ENCODE measurements at regions of chr3 and their contacts with region 1.

Region 1: GRCh38 chr3:33372218-33373081 is 67.8 kb downstream of the UBP1 start:
- DNase-seq: peak; percentile 39 to 57 (median 49)
- H3K4me3 ChIP-seq: no peak overlapping the region
- H3K4me3 Mint-ChIP-seq: peak overlapping the region in 1 of 8 donors; percentile 7
- H3K27ac ChIP-seq: no peak overlapping the region
- H3K27ac Mint-ChIP-seq: peak overlapping the region in 1 of 7 donors; percentile 51
- H3K4me1 ChIP-seq: no peaks in the 10 kb centered on the region
- H3K4me1 Mint-ChIP-seq: peaks cover 2 to 7% (median 5%) of the 10 kb centered on the region in 4 donors
- H3K27me3 ChIP-seq: no peaks in the 10 kb centered on the region
- H3K27me3 Mint-ChIP-seq: peaks cover 11 to 12% of the 10 kb centered on the region in 2 donors

Region 2: DNA sequence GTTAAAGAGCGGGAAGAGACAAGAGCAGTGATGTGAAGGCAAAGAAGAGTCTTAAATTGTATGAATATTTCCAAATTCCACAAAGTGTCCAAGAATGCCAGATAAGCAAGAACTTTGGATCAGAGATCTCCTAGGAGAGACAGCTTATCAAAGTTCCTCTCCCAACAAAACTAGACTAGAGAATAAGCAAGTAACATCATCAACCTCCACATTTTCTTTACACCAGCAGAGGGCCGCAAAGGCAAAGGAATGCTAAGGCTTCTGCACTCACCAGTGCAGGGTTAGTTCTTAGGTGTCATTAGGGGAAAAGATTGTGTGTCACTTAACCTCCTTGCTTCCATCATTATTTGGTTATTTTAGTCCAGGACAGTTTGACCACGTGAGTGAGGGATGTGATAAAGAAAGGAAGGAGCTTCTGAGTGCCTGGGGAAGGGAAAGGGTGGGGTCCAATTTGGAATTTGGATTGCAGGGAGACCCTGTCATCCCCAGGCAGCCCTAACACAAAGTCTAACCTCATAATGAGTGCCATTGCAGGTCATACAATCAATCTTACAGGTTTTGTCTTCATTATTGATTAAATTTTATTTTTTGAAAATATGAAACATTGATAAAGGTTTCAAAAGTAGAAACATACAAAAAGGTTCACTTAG is 862.2 kb before region 1 on chr3:
- CTCF ChIA-PET with region 1: interaction called, 3 read pairs
- POLR2A ChIA-PET with region 1: no interaction called
- intact Hi-C with region 1: loop called (anchors 5 kb)
- DNase-seq: peak; percentile 56 to 68 (median 59)
- H3K4me3 ChIP-seq: no peak overlapping the region
- H3K4me3 Mint-ChIP-seq: no peak overlapping the region
- H3K27ac ChIP-seq: no peak overlapping the region
- H3K27ac Mint-ChIP-seq: peak overlapping the region in 3 of 7 donors; percentile 1 to 57 (median 37)
- H3K4me1 ChIP-seq: no peaks in the 10 kb centered on the region
- H3K4me1 Mint-ChIP-seq: peaks cover 0 to 4% (median 1%) of the 10 kb centered on the region in 4 donors
- H3K27me3 ChIP-seq: no peaks in the 10 kb centered on the region
- H3K27me3 Mint-ChIP-seq: no peaks in the 10 kb centered on the region

Region 3: DNA sequence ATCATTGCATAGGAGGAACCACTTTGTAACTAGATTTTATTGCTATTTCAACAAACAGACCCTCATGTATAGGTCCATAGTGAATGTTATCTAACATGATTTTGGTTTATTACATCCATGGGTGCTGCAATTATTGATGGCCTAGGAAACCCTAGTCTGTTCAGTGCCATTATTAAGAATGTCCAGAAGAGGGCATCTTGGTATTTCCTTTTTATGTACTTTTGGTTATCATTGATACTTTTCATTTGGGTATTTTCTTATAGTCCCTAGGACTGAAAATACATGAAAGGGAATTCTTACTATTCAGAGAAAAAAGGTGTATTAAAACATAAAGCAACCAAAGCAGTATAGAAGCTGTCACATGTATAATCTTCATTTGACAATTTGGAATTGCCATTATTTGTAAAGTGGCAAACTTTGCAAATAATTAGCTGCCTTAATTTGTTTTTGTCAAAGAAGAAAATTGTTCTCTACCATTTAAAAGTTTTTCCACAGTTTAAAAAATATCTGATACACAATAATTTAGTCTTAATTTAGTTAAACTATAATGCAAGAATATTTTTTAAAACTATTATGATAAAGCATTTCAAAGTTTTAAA is 638.7 kb before region 1 on chr3:
- CTCF ChIA-PET with region 1: interaction called, 6 read pairs
- POLR2A ChIA-PET with region 1: no interaction called
- intact Hi-C with region 1: loop called (anchors 2 kb)
- DNase-seq: peak in 3 of 5 donors; percentile 16 to 22 (median 21)
- H3K4me3 ChIP-seq: no peak overlapping the region
- H3K4me3 Mint-ChIP-seq: no peak overlapping the region
- H3K27ac ChIP-seq: no peak overlapping the region
- H3K27ac Mint-ChIP-seq: no peak overlapping the region
- H3K4me1 ChIP-seq: no peaks in the 10 kb centered on the region
- H3K4me1 Mint-ChIP-seq: peaks cover 0 to 1% (median 0%) of the 10 kb centered on the region in 4 donors
- H3K27me3 ChIP-seq: no peaks in the 10 kb centered on the region
- H3K27me3 Mint-ChIP-seq: no peaks in the 10 kb centered on the region

Region 4: GRCh38 chr3:33315826-33316225 is 56.6 kb before region 1 on chr3:
- CTCF ChIA-PET with region 1: no interaction called
- POLR2A ChIA-PET with region 1: no interaction called
- intact Hi-C with region 1: no loop called
- DNase-seq: no peak
- H3K4me3 ChIP-seq: no peak overlapping the region
- H3K4me3 Mint-ChIP-seq: no peak overlapping the region
- H3K27ac ChIP-seq: no peak overlapping the region
- H3K27ac Mint-ChIP-seq: no peak overlapping the region
- H3K4me1 ChIP-seq: no peaks in the 10 kb centered on the region
- H3K4me1 Mint-ChIP-seq: peaks cover 0 to 6% (median 5%) of the 10 kb centered on the region in 4 donors
- H3K27me3 ChIP-seq: no peaks in the 10 kb centered on the region
- H3K27me3 Mint-ChIP-seq: peaks cover 10 to 18% of the 10 kb centered on the region in 2 donors

Region 5: DNA sequence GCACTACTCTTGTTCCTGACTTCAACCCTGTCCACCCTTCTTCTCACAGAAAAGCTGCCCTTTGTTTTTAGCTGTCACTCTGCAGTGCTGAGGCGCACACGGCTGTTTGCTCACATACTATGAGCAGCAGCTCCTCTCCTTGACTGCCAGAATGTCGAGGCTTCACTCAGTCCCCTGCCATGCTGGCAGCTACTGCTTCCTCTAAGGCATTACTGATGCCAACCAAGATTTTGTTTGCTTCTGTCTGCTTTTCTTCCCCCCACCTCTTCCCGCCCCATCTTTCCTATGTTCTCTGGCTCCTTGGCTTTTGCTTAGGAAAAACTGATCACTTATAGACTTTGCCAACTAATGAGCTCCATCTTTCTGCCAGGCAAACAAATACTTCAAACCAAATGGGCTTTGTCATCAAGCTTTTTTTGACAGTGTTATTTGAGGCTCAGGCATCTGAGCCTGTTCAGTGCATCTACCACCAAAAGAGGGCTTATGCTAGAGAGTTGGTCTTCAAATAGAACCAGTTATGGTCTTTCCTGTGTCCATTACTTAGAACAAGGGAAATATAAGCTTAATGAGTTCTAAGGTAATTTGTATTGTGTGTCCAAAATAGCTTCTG is 14.2 kb before region 1 on chr3:
- CTCF ChIA-PET with region 1: interaction called, 16 read pairs
- POLR2A ChIA-PET with region 1: no interaction called
- intact Hi-C with region 1: no loop called
- DNase-seq: no peak
- H3K4me3 ChIP-seq: no peak overlapping the region
- H3K4me3 Mint-ChIP-seq: no peak overlapping the region
- H3K27ac ChIP-seq: no peak overlapping the region
- H3K27ac Mint-ChIP-seq: peak overlapping the region in 1 of 7 donors; percentile 29
- H3K4me1 ChIP-seq: no peaks in the 10 kb centered on the region
- H3K4me1 Mint-ChIP-seq: peaks cover 0 to 1% (median 0%) of the 10 kb centered on the region in 4 donors
- H3K27me3 ChIP-seq: no peaks in the 10 kb centered on the region
- H3K27me3 Mint-ChIP-seq: peaks cover 6 to 22% of the 10 kb centered on the region in 2 donors

Region 6: DNA sequence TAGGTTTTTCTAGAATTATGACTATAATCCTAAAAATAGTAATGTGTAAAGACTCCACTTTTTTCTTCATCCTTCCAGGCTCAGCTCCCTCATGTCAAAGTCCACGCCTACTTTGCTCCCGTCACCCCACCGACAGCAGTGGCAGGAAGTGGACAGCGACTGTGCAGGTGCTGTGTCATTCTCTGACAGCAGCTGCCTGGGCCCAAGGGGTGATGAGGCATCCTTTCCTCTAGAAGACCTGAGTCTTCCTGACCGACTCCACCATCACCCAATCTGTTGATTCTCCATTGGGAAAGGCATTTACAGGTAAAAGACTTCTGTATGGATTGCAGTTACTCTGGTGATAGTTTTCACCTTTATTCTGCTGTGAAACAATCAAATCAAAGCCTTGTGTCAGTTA is 13.0 kb after region 1 on chr3:
- CTCF ChIA-PET with region 1: interaction called, 24 read pairs
- POLR2A ChIA-PET with region 1: no interaction called
- intact Hi-C with region 1: no loop called
- DNase-seq: peak in 1 of 5 donors; percentile 43
- H3K4me3 ChIP-seq: no peak overlapping the region
- H3K4me3 Mint-ChIP-seq: no peak overlapping the region
- H3K27ac ChIP-seq: no peak overlapping the region
- H3K27ac Mint-ChIP-seq: peak overlapping the region in 3 of 7 donors; percentile 23 to 66 (median 42)
- H3K4me1 ChIP-seq: peaks cover 5% of the 10 kb centered on the region
- H3K4me1 Mint-ChIP-seq: peaks cover 4 to 20% (median 9%) of the 10 kb centered on the region in 4 donors
- H3K27me3 ChIP-seq: no peaks in the 10 kb centered on the region
- H3K27me3 Mint-ChIP-seq: no peaks in the 10 kb centered on the region

Region 7: DNA sequence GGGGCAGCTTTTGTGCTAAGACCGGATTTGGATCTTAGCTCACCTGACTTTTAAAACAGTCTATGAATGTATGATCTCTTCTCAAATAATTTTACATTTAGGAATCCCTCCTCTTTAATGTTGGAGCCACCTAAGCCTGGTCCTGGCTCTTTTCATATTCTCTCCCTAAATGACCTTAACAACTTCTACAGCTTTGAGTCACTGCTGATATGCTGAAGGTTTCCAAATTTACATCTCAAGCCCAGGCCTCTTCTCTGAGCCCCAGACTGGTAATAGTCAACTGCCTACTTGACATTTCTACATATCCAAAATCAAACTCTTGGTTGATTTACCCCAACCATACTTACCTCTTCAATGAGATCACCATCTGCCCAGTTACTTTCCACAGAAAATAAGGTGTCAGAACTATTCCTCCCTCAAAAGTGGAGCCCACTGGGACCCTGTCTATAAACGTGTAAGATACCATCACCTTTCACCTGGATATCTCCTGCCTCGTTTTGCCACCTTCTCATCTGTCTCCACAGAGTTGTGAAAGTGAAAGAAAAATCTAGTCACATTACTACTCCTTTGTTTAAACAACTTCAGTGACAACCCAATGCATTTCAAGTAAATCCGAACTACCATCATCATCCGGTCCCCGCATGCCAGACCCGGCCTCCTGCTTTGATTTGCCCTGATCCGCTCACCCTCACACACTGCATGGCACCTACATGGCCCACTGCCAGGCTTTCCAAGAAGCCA is 19.0 kb after region 1 on chr3:
- CTCF ChIA-PET with region 1: interaction called, 24 read pairs
- POLR2A ChIA-PET with region 1: no interaction called
- intact Hi-C with region 1: no loop called
- DNase-seq: no peak
- H3K4me3 ChIP-seq: no peak overlapping the region
- H3K4me3 Mint-ChIP-seq: peak overlapping the region in 1 of 8 donors; percentile 21
- H3K27ac ChIP-seq: no peak overlapping the region
- H3K27ac Mint-ChIP-seq: peak overlapping the region in 6 of 7 donors; percentile 37 to 80 (median 62)
- H3K4me1 ChIP-seq: peaks cover 7% of the 10 kb centered on the region
- H3K4me1 Mint-ChIP-seq: peaks cover 4 to 14% (median 6%) of the 10 kb centered on the region in 4 donors
- H3K27me3 ChIP-seq: no peaks in the 10 kb centered on the region
- H3K27me3 Mint-ChIP-seq: no peaks in the 10 kb centered on the region

Region 8: DNA sequence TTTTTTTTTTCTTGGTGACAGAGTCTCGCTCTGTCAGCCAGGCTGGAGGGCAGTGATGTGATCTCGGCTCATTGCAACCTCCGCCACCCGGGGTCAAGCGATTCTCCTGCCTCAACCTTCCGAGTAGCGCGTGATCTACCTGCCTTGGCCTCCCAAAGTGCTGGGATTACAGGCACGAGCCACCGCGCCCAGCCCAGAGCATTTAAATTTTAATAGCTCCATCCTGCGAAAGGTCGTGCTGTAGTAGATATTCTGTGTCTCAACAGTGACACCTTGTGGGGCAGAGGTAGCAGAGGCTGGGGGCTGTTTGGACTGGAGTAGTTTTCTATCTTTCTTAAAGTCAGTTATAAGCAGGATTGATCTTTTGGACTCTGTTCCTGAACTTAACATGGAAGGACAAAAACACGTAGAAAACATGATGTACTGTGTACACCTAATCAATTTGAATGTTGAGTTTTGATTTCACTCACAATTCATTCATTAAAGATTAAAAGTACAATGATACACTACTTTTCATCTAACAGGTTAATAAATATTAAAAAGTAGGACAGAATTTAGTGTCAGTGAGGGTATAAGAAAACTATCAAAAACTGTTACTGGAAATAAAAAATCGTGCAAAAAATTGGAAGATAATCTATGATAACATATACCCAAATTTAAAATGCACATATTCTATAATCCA is 415.0 kb after region 1 on chr3:
- CTCF ChIA-PET with region 1: interaction called, 18 read pairs
- POLR2A ChIA-PET with region 1: no interaction called
- intact Hi-C with region 1: loop called (anchors 10 kb)
- DNase-seq: peak; percentile 52 to 65 (median 59)
- H3K4me3 ChIP-seq: no peak overlapping the region
- H3K4me3 Mint-ChIP-seq: peak overlapping the region in 4 of 8 donors; percentile 23 to 70 (median 30)
- H3K27ac ChIP-seq: no peak overlapping the region
- H3K27ac Mint-ChIP-seq: peak overlapping the region in 2 of 7 donors; percentile 21 to 37
- H3K4me1 ChIP-seq: peaks cover 4% of the 10 kb centered on the region
- H3K4me1 Mint-ChIP-seq: peaks cover 0 to 4% (median 2%) of the 10 kb centered on the region in 4 donors
- H3K27me3 ChIP-seq: no peaks in the 10 kb centered on the region
- H3K27me3 Mint-ChIP-seq: peaks cover 6 to 11% of the 10 kb centered on the region in 2 donors

Measured in CD4-positive, alpha-beta memory T cell (primary cell).